Calu3 (cell line): ENCODE measurements at regions of chr14 and their contacts with region 1.

Region 1: DNA sequence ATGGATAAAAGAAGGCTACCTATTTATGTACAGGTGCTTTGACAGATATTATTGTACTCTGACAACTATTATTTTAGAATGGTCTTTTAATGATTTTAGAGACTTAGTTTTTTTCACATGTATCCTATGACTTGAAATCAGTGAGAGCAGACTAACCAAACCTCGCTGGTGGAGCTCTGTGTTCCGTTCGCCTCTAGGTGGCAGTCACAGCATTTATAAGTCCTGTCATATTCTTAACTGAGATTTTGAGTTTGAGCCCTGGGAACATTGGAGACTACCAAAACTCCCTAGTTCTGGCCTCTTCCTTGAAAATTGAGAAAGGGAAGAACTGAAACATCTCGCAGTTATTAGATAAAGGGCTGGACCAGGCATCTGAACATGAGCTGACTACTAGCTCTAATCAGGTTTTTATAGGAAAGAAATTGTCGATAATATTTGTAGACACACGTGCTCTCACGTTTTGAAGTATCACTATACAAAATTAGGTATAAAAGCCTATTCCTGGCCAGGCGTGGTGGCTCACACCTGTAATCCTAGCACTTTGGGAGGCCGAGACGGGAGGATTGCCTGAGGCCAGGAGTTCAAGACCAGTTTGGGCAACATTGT is 48.3 kb downstream of the TTLL5 start:
- DNase-seq: peak; percentile 54
- H3K4me3 Mint-ChIP-seq: no peak overlapping the region
- H3K27ac Mint-ChIP-seq: no peak overlapping the region
- H3K4me1 Mint-ChIP-seq: peaks cover 17% of the 10 kb centered on the region
- H3K27me3 Mint-ChIP-seq: no peaks in the 10 kb centered on the region
- CTCF ChIP-seq: peak; percentile 20

Region 2: DNA sequence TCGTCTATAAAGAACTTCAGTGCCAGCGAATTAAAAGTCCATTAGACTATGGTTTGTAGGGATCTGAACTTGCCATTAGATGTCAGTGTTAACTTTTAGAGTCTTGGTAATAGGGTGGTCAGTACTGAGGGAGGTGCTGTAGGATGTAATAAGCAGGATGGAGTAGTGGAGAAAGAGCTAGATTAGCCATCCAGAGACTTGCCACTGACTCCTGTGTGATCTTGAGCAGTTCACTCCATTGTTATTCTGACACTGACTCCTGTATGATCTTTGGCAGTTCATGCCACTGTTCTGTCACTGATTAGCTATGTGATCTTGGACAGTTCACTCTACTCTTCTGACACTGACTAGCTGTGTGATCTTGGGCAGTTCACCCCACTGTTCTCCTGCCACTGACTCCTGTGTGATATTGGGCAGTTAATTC is 85.3 kb after region 1 on chr14:
- CTCF ChIA-PET with region 1: interaction called, 11 read pairs
- intact Hi-C with region 1: loop called (anchors 5 kb)
- DNase-seq: no peak
- H3K4me3 Mint-ChIP-seq: no peak overlapping the region
- H3K27ac Mint-ChIP-seq: no peak overlapping the region
- H3K4me1 Mint-ChIP-seq: no peaks in the 10 kb centered on the region
- H3K27me3 Mint-ChIP-seq: no peaks in the 10 kb centered on the region
- CTCF ChIP-seq: no peak